ENCODE measurements at regions of chr5 and their contacts with region 1.

Region 1: GRCh38 chr5:172904643-172905347 is 54.4 kb upstream of the RPL26L1 start:
- DNase-seq: no peak
- H3K4me3 ChIP-seq: no peak overlapping the region
- H3K27me3 ChIP-seq: no peaks in the 10 kb centered on the region
- CTCF ChIP-seq: no peak

Region 2: GRCh38 chr5:172420240-172420943 is 484.4 kb before region 1 on chr5:
- CTCF ChIA-PET with region 1: no interaction called
- POLR2A ChIA-PET with region 1: no interaction called
- DNase-seq: peak; percentile 70
- H3K4me3 ChIP-seq: no peak overlapping the region
- H3K27me3 ChIP-seq: no peaks in the 10 kb centered on the region
- CTCF ChIP-seq: no peak

Region 3: DNA sequence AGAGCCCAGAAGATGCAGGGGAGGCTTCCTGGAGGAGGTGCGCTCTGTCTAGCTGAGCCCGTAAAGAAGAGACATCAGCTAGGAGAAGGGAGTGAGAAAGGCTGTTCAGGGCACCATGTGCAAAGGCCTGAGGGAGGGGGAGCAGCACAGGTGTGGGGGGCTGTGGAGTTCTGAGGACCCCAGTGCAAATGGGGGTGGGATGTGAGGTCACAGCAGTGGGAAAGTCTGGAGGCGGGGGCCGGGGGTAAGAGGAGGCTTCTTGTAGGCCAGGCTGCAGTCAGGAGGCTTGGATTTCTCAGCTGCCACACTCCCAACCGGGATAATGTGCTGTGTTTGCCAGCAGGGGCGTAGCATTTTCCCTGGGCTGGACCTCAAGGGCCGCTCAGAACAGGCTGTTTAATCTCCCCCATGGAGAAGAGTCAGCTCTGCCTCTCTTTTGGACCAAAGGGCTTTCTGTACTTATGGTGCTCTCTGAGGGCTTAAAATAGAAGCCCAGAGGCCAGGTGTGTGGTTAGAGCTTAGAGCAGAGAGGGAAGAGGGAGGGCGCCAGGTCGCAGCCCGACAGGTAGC is 258.0 kb before region 1 on chr5:
- CTCF ChIA-PET with region 1: no interaction called
- POLR2A ChIA-PET with region 1: interaction called, 13 read pairs
- DNase-seq: no peak
- H3K4me3 ChIP-seq: no peak overlapping the region
- H3K27me3 ChIP-seq: no peaks in the 10 kb centered on the region
- CTCF ChIP-seq: peak; percentile 25; the same call in 1 of the 2 replicates

Region 4: GRCh38 chr5:172816901-172817564 is 87.8 kb before region 1 on chr5:
- CTCF ChIA-PET with region 1: no interaction called
- POLR2A ChIA-PET with region 1: no interaction called
- DNase-seq: peak; percentile 29
- H3K4me3 ChIP-seq: no peak overlapping the region
- H3K27me3 ChIP-seq: no peaks in the 10 kb centered on the region
- CTCF ChIP-seq: no peak

Region 5: DNA sequence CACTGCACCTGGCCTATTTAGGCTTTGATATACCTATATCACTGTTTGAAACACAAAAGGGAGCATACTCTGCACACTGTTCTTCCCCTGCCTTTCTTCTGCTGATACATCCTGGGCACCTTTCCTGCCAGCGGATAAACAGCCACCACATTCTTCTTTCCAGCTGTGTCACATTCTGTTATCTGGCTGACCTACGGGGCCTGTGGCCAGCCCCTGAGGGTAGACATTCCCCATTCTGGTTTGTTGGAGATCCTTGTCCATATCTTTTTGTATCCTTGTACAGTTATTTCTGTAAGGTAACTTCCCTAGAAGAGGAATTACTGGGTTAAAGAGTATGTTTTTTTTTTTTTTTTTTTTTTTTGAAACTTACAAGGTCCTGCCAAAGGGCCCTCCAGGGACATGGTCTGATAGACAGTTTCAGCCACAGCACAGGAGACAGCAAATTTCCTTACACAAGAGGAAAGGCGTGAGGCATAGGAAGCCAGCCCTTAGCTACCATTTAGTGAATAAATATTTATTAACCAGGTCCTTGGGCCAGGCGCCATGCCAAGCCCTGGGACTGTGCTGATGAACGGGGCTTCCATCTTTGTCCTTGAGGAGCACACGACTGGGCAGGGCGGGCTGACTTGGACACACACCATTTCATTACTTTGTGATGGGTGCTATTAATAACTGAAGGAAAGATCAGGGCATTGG is 12.9 kb before region 1 on chr5:
- CTCF ChIA-PET with region 1: no interaction called
- POLR2A ChIA-PET with region 1: no interaction called
- DNase-seq: no peak
- H3K4me3 ChIP-seq: no peak overlapping the region
- H3K27me3 ChIP-seq: no peaks in the 10 kb centered on the region
- CTCF ChIP-seq: no peak

Region 6: DNA sequence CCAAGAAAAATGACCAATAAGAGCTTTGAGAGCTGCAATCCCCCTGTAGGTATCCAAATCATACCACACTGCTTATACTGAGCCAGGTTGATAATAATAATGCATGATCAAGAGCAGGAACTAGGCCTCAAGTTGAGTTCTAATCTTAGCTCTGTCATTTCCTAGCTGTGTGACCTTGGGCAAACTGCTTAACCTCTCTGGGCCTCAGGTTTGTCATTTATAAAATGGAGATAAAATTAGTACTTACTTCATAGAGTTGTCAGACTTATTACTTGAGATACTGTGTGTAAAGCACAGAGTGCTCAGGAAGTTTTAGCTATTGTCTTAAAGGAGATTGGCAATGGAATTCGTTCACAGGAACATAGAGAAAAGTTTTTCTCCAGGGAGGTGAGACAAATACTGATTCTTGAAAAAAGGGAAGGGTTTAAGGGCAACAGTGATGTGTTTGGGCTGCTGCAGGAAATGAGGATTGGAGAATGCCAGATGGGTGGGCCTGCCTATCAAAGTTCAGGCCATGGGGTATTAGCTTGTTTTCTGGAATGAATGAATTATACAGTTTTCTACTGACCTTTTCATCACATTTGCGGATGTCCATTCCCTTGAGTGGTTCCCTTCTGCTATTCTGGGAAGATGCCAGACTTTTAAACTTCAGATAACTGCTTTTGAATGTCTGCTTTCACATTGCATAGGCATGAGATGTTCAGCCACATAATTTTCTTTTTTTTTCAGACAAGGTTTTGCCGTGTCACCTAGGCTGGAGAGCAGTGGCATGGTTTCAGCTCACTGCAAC is 68.5 kb after region 1 on chr5:
- CTCF ChIA-PET with region 1: no interaction called
- POLR2A ChIA-PET with region 1: no interaction called
- DNase-seq: no peak
- H3K4me3 ChIP-seq: no peak overlapping the region
- H3K27me3 ChIP-seq: no peaks in the 10 kb centered on the region
- CTCF ChIP-seq: no peak

Measured in BJ (cell line).